Dorsolateral prefrontal cortex (tissue), 120 donors: ENCODE measurements at regions of chr16 and their contacts with region 1.

Region 1: DNA sequence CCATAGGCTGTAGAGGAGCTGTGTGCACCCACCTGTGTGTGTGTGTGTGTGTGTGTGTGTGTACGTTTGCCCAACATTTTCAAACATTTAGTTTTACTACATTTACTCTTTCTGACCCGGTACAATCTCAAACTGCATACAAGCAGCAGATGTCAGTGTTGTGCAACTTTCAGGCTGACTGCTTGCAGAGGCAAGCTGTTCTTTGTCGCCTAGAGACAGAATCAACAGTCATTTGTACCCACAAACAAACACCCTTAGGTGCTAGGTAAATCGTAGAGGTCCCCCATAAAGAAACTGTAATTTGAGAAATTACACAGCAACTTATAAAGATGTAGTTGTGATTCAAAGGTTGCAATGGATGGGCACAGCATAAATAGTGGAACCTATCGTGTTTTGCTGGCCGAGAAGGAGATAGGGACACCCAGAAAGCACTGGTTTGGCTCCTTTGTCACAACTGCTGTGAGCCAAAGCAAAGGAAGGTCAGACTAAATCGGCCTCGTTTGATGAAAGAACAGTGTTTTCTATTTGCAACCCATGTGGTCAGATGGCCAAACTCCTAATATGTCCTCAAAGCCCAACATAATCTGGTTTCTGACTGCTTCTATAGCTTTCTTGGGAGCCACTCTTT is 478.4 kb downstream of the TOX3 start:
- DNase-seq: peak in 7 of 10 donors; percentile 23 to 72 (median 48)
- H3K4me3 ChIP-seq: peak overlapping the region in 11 of 59 donors; percentile 9 to 40 (median 18)
- H3K27ac ChIP-seq: peak overlapping the region in 56 of 59 donors; percentile 3 to 98 (median 90)
- H3K27me3 ChIP-seq: no peaks in the 10 kb centered on the region
- CTCF ChIP-seq: peak in 54 of 56 donors; percentile 37 to 79 (median 62)

Region 2: GRCh38 chr16:51994597-51994996 is 74.0 kb before region 1 on chr16:
- intact Hi-C with region 1: no loop called
- DNase-seq: no peak
- H3K4me3 ChIP-seq: no peak overlapping the region
- H3K27ac ChIP-seq: no peak overlapping the region
- H3K27me3 ChIP-seq: peaks cover 0 to 7% (median 0%) of the 10 kb centered on the region in 45 donors
- CTCF ChIP-seq: no peak

Region 3: GRCh38 chr16:52128361-52128760 is 59.8 kb after region 1 on chr16:
- intact Hi-C with region 1: loop called in 1 of 2 experiments (anchors 2 kb)
- DNase-seq: peak in 4 of 10 donors; percentile 28 to 40 (median 31)
- H3K4me3 ChIP-seq: peak overlapping the region in 5 of 59 donors; percentile 3 to 21 (median 10)
- H3K27ac ChIP-seq: peak overlapping the region in 3 of 59 donors; percentile 9 to 51 (median 17)
- H3K27me3 ChIP-seq: peaks cover 0 to 2% (median 0%) of the 10 kb centered on the region in 45 donors
- CTCF ChIP-seq: peak in 36 of 56 donors; percentile 6 to 60 (median 32)

Region 4: GRCh38 chr16:52497067-52497816 is 428.7 kb after region 1 on chr16:
- intact Hi-C with region 1: loop called in 1 of 2 experiments (anchors 10 kb)
- DNase-seq: no peak
- H3K4me3 ChIP-seq: peak overlapping the region in 2 of 59 donors; percentile 26 to 36
- H3K27ac ChIP-seq: peak overlapping the region in 53 of 59 donors; percentile 3 to 91 (median 74)
- H3K27me3 ChIP-seq: peaks cover 0 to 3% (median 0%) of the 10 kb centered on the region in 45 donors
- CTCF ChIP-seq: no peak

Region 5: GRCh38 chr16:52912565-52913173 is 844.1 kb after region 1 on chr16:
- intact Hi-C with region 1: loop called (anchors 2 to 5 kb)
- DNase-seq: peak; percentile 33 to 85 (median 76)
- H3K4me3 ChIP-seq: no peak overlapping the region
- H3K27ac ChIP-seq: no peak overlapping the region
- H3K27me3 ChIP-seq: peaks cover 0 to 2% (median 0%) of the 10 kb centered on the region in 45 donors
- CTCF ChIP-seq: peak; percentile 43 to 96 (median 85)